Activated naive CD4-positive, alpha-beta T cell treated with anti-CD3 and anti-CD28 coated beads for 36 hours (primary cell): ENCODE measurements at regions of chr7 and their contacts with region 1.

Region 1: DNA sequence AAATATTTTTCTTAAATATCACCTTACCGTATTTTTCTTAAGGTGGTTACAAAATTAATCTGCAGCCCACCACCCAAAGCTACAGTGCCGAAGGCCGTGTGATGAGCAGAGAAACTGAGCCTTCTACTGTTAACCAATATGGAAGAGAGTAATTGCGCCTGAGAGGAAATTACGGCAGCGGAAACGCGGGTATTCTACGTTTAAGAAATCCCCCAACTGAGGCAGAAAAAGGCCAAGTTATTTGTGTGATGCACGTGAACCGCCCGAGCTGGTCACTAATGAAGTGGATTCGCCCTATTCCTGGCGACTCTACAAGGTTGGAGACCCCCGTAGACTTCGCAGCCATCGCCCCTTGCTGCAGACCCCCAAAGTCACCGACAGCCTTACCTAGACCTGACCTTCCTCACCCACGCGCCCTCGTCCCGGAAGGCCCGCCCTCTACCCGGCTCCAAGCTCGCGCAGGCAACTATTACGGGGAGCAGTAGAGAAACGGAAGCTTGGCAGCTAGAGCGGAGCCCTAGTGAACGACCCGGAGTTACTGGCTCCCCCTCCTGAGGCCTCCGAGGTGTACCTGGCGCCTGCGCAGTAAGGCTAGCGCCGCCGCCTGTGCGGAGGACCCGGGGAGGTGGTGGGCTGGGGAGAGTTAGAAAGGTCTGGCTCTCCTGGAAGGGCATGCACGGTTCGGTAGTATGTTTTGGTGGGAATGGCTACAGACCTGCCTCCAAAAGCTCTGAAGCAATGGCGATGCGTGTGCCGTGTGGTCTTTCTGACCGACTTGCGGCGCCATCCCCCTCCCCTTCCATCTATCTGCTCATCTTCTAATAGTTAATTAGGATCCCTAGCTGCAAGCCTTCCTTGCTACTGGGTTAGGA is at the start of gene MRPS33:
- DNase-seq: peak; percentile 97
- H3K4me3 Mint-ChIP-seq: peak within 1 kb of the TSS; percentile 95
- H3K27ac Mint-ChIP-seq: peak within 1 kb of the TSS; percentile 98
- H3K4me1 Mint-ChIP-seq: peaks cover 28% of the 10 kb centered on the region
- H3K27me3 Mint-ChIP-seq: peaks cover 3% of the 10 kb centered on the region
- total RNA-seq, gene MRPS33: 116 to 120 TPM

Region 2: DNA sequence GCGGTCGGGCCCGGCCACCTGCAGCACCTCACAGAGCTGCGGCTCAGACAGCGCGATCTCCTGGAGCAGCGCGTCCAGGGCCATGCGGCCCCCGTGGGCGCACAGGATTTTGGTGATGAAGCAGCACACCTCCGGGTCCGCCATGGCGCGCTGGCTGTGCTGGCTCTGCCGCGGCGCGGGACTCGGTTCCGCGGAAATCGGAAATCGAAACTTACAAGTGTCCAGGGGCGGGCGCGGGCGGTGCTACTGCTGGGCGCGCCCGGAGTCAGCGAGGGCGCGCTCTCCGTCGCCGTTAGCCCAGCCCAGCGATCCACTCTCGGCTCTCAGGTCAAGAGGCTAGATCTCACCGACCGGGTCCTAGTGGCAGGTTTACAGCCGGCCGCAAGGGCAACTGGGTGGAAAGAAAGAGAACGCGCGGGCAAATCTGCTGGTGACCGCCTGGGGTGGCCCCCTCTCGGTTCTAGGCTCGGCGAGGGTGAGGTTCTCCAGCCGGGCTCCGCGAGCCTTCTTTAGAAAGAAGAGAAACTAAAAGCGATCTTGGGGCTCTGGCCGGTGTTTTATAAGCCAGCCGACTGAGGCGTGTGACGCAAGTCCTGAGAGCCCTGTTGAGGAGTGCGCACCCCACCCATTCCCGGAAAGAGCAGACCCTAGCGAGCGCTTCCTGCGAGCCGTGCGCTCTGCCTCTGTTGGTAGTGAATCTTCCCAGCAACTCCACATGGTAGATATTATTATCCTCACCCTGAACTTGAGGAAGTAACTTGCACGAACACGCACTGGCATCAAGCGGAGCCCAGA is 1905.4 kb before region 1 on chr7 and contains the start of gene ZC3HAV1:
- CTCF ChIA-PET with region 1: no interaction called
- intact Hi-C with region 1: loop called (anchors 5 kb)
- DNase-seq: peak; percentile 90
- H3K4me3 Mint-ChIP-seq: peak within 1 kb of the TSS; percentile 92
- H3K27ac Mint-ChIP-seq: peak within 1 kb of the TSS; percentile 95
- H3K4me1 Mint-ChIP-seq: peaks cover 34% of the 10 kb centered on the region
- H3K27me3 Mint-ChIP-seq: no peaks in the 10 kb centered on the region
- total RNA-seq, gene ZC3HAV1: 131 to 134 TPM

Region 3: DNA sequence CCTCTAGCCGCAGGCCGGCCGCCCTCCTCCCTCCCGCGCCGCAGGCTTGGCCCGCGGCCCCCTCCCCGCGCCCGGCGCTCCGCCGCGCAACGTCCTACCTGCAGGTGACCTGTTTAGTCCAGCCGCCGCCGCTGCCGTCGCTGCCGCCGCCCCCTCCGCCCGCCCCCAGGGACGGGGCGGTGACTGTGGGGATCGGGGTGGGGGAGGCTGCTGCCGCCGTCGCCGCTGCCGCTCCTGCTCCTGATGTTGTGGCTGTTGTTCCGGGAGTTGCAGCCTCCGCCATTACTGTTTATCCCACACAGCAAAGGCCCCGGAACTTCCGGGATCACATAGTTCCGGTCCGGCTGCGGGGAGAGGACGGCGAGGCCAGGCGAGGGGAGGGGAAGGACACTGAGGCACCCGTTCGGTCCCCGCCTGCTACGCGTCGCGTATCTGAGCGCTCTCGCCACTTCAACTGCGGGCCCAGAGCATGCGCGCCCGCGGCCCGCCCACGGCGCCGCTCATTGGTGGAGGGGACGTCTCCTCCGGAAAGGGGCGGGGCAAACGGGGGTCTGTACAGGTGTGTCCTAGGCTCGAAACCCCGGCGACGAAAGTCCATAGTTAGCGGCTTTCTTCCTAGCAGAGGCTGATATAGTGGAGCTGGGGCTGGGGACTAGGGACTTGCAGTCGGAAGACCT is 535.6 kb before region 1 on chr7 and contains the start of gene MKRN1:
- CTCF ChIA-PET with region 1: interaction called, 3 read pairs
- intact Hi-C with region 1: loop called (anchors 1 kb)
- DNase-seq: peak; percentile 94
- H3K4me3 Mint-ChIP-seq: peak within 1 kb of the TSS; percentile 95
- H3K27ac Mint-ChIP-seq: peak within 1 kb of the TSS; percentile 91
- H3K4me1 Mint-ChIP-seq: peaks cover 29% of the 10 kb centered on the region
- H3K27me3 Mint-ChIP-seq: no peaks in the 10 kb centered on the region
- total RNA-seq, gene MKRN1: 77.6 to 78.6 TPM

Region 4: DNA sequence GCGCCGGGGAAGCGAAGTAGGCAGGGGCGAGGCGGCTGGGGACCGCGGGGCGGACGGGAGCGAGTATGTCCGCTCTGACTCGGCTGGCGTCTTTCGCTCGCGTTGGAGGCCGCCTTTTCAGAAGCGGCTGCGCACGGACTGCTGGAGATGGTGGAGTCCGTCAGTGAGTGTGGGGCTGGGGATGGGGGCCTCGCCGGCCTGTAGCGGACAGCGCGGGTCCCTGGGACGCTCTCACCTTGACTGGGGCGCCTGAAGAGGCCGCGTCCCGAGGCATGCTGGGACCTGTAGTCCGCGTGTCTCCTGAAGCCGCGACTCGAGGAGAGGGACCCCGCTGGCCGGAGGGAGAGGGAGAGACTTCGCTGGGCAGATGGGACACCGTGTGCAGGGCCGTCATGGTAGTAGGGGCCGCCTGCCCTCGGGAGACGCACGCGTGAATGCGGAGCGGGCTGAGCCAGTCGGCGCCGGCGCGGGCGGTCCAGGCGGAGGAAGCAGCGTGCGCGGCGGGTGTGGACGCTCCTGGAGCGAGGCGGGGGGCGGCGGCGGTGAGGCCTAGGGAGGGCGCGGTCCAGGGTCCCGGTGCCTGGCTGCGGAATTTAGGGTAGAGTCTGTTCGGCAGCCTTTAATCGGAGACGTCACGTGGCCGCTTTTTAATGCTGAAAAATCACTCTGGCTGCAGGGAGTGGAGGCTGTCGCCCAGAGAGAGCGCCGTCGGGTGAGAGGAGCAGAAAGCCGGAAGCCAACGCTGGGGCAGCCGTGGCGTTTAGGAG is 317.9 kb before region 1 on chr7 and contains the start of gene NDUFB2:
- CTCF ChIA-PET with region 1: no interaction called
- intact Hi-C with region 1: loop called (anchors 1 kb)
- DNase-seq: peak; percentile 75
- H3K4me3 Mint-ChIP-seq: peak within 1 kb of the TSS; percentile 98
- H3K27ac Mint-ChIP-seq: peak within 1 kb of the TSS; percentile 99
- H3K4me1 Mint-ChIP-seq: peaks cover 34% of the 10 kb centered on the region
- H3K27me3 Mint-ChIP-seq: no peaks in the 10 kb centered on the region
- total RNA-seq, gene NDUFB2: 167 to 179 TPM

Region 5: GRCh38 chr7:140924019-140924820 is 90.5 kb before region 1 on chr7:
- CTCF ChIA-PET with region 1: no interaction called
- intact Hi-C with region 1: loop called (anchors 1 kb)
- DNase-seq: peak; percentile 77
- H3K4me3 Mint-ChIP-seq: no peak overlapping the region
- H3K27ac Mint-ChIP-seq: no peak overlapping the region
- H3K4me1 Mint-ChIP-seq: peaks cover 10% of the 10 kb centered on the region
- H3K27me3 Mint-ChIP-seq: no peaks in the 10 kb centered on the region

Region 6: DNA sequence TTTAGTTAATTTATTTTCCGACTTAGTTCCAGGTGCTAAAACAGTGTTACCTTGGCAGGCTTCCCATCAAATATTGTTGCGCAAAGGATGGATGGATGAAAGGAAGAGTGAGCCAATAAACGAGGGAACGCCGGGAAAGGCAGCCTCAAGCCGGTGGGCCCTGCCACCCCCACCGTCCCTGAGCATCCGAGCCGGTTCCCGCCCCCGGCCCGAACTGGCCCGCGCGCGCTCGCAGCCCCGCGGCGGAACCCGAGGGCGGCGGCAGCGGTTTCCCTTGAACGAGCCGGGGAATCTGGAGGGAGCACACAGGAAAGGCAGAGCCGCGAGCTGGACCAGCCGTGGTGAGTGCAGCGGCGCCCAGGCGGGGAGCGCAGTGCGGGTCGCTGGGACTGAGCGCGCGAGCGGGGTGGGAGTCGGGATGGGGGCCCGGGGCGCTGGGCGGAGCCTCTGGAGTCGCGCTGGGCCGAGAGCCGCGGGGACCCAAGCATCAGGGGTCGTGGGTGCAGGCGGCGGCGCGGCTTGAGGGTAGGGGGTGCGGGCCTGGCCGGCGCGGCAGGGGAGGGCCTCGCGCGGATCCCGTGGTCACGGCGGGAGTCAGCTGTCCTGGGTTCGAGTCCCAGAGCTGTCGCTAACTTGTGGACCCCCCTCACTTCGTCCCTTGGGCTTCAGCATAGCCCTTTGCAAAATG is 536.5 kb after region 1 on chr7 and contains the start of gene AGK:
- CTCF ChIA-PET with region 1: no interaction called
- intact Hi-C with region 1: loop called (anchors 2 kb)
- DNase-seq: peak; percentile 83
- H3K4me3 Mint-ChIP-seq: peak within 1 kb of the TSS; percentile 86
- H3K27ac Mint-ChIP-seq: peak within 1 kb of the TSS; percentile 85
- H3K4me1 Mint-ChIP-seq: peaks cover 36% of the 10 kb centered on the region
- H3K27me3 Mint-ChIP-seq: no peaks in the 10 kb centered on the region
- total RNA-seq, gene AGK: 35.8 to 37.9 TPM

Region 7: DNA sequence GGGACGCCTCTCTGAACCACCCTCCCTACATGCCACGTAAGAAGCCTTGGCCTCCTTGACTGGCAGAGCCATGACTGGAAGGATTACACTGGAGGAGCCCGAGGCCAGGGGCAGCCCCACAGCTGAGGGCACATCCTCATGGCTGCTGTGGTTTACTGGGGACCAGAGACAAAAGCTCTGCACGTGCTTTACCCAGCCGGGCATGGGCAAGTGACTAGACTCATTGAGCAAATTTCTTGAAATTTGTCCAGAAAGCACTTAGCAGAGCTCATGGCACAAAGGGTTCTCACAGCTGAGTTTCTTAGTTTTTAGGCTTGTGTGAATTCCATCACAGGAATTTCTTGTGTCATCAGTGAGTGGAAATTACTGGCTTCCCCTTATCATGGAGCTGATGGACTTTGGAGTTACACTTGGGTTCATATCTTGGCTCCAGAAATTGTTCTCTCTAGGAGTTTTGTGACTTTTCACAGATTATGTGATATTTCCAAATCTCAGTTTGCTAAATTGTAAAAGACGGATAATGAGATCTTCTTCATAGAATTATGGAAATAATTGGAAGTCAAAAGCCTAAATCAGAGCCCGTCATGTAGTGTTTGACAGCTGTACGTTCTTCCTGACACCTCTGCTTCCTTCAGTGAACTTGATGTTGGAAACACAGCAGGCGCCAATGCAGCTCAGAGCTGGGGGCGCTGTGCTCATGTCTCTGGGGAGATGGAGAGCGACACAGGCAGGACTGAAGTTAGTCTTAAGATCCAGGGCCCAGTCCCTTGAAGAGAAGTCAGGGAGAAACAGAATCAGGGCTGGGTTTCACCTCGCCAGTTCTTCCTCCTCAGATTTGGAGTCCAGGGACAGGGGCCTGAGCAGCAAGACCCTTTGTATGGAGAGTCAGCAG is 1049.0 kb after region 1 on chr7:
- CTCF ChIA-PET with region 1: no interaction called
- intact Hi-C with region 1: no loop called
- DNase-seq: no peak
- H3K4me3 Mint-ChIP-seq: no peak overlapping the region
- H3K27ac Mint-ChIP-seq: no peak overlapping the region
- H3K4me1 Mint-ChIP-seq: no peaks in the 10 kb centered on the region
- H3K27me3 Mint-ChIP-seq: peaks cover 2% of the 10 kb centered on the region